ENCODE measurements at regions of chr11 and their contacts with region 1.

Region 1: GRCh38 chr11:64742889-64743590 is 902 bp downstream of the RASGRP2 start:
- DNase-seq: peak; percentile 84
- H3K4me3 Mint-ChIP-seq: peak overlapping the region; percentile 37
- H3K27ac Mint-ChIP-seq: no peak overlapping the region
- H3K4me1 Mint-ChIP-seq: peaks cover 25% of the 10 kb centered on the region
- H3K27me3 Mint-ChIP-seq: peaks cover 8% of the 10 kb centered on the region

Region 2: GRCh38 chr11:64723117-64723906 is 19.7 kb before region 1 on chr11 and contains the start of gene NRXN2:
- CTCF ChIA-PET with region 1: interaction called, 4 read pairs
- POLR2A ChIA-PET with region 1: no interaction called
- intact Hi-C with region 1: loop called (anchors 2 kb)
- DNase-seq: peak; percentile 91
- H3K4me3 Mint-ChIP-seq: peak within 1 kb of the TSS; percentile 59
- H3K27ac Mint-ChIP-seq: peak within 1 kb of the TSS; percentile 28
- H3K4me1 Mint-ChIP-seq: peaks cover 6% of the 10 kb centered on the region
- H3K27me3 Mint-ChIP-seq: peaks cover 15% of the 10 kb centered on the region
- total RNA-seq, gene NRXN2: 0.31 to 0.41 TPM

Region 3: DNA sequence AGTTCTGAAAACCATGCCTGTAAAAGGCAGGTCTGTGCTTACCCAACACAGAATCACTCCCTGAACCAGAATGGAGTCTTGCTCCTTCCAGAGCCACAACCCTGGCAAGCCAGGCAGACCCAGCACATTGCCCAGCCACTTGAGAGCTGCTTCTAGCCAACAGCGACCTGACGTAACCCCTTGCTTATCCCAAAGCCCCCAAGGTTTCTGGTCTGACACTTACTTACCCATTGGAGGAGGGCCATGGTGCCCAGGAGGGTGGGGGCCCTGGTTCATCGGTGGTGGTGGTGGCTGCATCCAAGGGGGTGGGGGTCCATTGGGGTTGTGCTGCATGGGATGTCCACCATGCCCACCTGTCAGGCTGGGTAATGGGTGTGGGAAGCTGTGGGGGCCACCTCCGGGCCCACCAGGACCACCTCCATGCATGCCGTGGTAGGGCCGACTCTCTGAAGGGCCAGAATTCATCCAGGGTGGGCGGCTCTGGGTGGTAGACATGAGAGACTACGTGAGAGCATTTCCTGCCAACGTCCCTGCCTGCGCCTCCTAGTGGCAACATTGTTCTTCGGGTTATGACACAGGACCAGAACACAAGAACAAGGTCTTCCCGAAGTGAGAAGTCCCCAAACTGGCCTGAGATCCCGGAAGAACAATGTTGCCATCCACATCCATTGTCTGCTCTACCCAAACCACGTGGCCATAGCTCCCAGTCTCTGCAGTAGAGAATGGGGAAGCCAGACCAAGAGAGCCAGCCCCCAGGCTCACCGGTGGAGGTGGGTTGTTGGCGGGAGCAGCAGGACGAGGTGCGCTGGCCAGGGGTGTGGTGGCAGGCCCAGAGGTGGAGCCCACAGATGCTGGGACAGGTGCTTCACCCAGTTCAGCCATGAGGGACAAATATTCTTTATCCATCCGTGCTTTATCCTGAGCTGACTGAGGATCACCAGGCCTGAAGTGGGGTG is 24.6 kb after region 1 on chr11:
- CTCF ChIA-PET with region 1: interaction called, 15 read pairs
- POLR2A ChIA-PET with region 1: interaction called, 6 read pairs
- intact Hi-C with region 1: loop called (anchors 2 kb)
- DNase-seq: peak; percentile 83
- H3K4me3 Mint-ChIP-seq: no peak overlapping the region
- H3K27ac Mint-ChIP-seq: peak overlapping the region; percentile 85
- H3K4me1 Mint-ChIP-seq: peaks cover 87% of the 10 kb centered on the region
- H3K27me3 Mint-ChIP-seq: no peaks in the 10 kb centered on the region

Region 4: GRCh38 chr11:64810271-64810890 is 67.3 kb after region 1 on chr11 and contains the start of gene MEN1:
- CTCF ChIA-PET with region 1: interaction called, 4 read pairs
- POLR2A ChIA-PET with region 1: no interaction called
- intact Hi-C with region 1: loop called (anchors 1 kb)
- DNase-seq: peak; percentile 92
- H3K4me3 Mint-ChIP-seq: peak within 1 kb of the TSS; percentile 97
- H3K27ac Mint-ChIP-seq: peak within 1 kb of the TSS; percentile 74
- H3K4me1 Mint-ChIP-seq: peaks cover 20% of the 10 kb centered on the region
- H3K27me3 Mint-ChIP-seq: no peaks in the 10 kb centered on the region
- total RNA-seq, gene MEN1: 31.3 to 32.2 TPM